GM12878 (cell line): ENCODE measurements at regions of chr1 and their contacts with region 1.

Region 1: GRCh38 chr1:46114925-46115603 is 17.4 kb downstream of the PIK3R3 start:
- DNase-seq: no peak
- ATAC-seq: peak; percentile 35
- H3K4me3 ChIP-seq: no peak overlapping the region
- H3K27ac ChIP-seq: peak overlapping the region; percentile 4; the same call in 1 of the 2 replicates
- H3K4me1 ChIP-seq: peaks cover 7% of the 10 kb centered on the region; the same call in 1 of the 2 replicates
- H3K27me3 ChIP-seq: no peaks in the 10 kb centered on the region
- CTCF ChIP-seq: no peak
- EP300 ChIP-seq: no peak
- POLR2A ChIP-seq: no peak
- RAD21 ChIP-seq: no peak

Region 2: DNA sequence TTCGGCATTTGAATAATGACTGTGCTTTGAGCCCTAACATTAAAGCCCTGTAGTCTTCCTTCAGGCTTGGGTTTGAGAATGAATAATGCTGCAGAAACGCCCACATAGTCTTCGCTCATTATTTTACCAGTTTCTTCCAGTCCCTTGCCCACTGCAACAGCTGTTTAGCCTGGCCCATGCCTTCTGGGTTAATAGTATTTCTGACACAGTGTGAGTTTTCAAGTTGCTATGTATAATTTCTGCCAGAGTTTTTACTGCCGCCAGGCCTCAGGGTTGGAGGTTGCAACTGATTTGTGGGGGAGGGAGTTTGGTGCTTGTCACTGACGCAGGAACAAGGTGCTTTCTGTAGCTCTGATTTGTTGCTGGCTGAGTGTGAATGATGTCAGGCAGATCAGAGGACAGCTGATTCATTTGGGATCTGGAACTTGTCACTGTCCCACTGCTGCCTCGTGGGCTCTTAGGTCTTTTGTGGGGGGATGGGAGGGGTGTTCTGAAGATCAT is 201.8 kb before region 1 on chr1:
- CTCF ChIA-PET with region 1: no interaction called
- POLR2A ChIA-PET with region 1: no interaction called
- RAD21 ChIA-PET with region 1: no interaction called
- SMC1A ChIA-PET with region 1: no interaction called
- in situ Hi-C with region 1: no loop called
- intact Hi-C with region 1: no loop called
- DNase-seq: no peak
- ATAC-seq: peak; percentile 52
- H3K4me3 ChIP-seq: no peak overlapping the region
- H3K27ac ChIP-seq: no peak overlapping the region
- H3K4me1 ChIP-seq: peaks cover 3% of the 10 kb centered on the region; the same call in 1 of the 2 replicates
- H3K27me3 ChIP-seq: no peaks in the 10 kb centered on the region
- CTCF ChIP-seq: no peak
- EP300 ChIP-seq: no peak
- POLR2A ChIP-seq: no peak
- RAD21 ChIP-seq: no peak

Region 3: GRCh38 chr1:46102769-46103476 is 12.1 kb before region 1 on chr1:
- CTCF ChIA-PET with region 1: interaction called, 7 read pairs
- POLR2A ChIA-PET with region 1: interaction called, 9 read pairs
- RAD21 ChIA-PET with region 1: interaction called, 5 read pairs
- SMC1A ChIA-PET with region 1: interaction called, 13 read pairs
- in situ Hi-C with region 1: no loop called
- intact Hi-C with region 1: no loop called
- DNase-seq: no peak
- ATAC-seq: no peak
- H3K4me3 ChIP-seq: no peak overlapping the region
- H3K27ac ChIP-seq: no peak overlapping the region
- H3K4me1 ChIP-seq: peaks cover 15% of the 10 kb centered on the region
- H3K27me3 ChIP-seq: no peaks in the 10 kb centered on the region
- CTCF ChIP-seq: no peak
- EP300 ChIP-seq: no peak
- POLR2A ChIP-seq: no peak
- RAD21 ChIP-seq: no peak

Region 4: GRCh38 chr1:46262508-46262907 is 147.4 kb after region 1 on chr1:
- CTCF ChIA-PET with region 1: no interaction called
- POLR2A ChIA-PET with region 1: no interaction called
- RAD21 ChIA-PET with region 1: no interaction called
- SMC1A ChIA-PET with region 1: no interaction called
- in situ Hi-C with region 1: no loop called
- intact Hi-C with region 1: no loop called
- DNase-seq: no peak
- ATAC-seq: no peak
- H3K4me3 ChIP-seq: no peak overlapping the region
- H3K27ac ChIP-seq: no peak overlapping the region
- H3K4me1 ChIP-seq: no peaks in the 10 kb centered on the region
- H3K27me3 ChIP-seq: no peaks in the 10 kb centered on the region
- CTCF ChIP-seq: no peak
- EP300 ChIP-seq: no peak
- POLR2A ChIP-seq: no peak
- RAD21 ChIP-seq: no peak